Panc1 (cell line): ENCODE measurements at regions of chr4 and their contacts with region 1.

Region 1: DNA sequence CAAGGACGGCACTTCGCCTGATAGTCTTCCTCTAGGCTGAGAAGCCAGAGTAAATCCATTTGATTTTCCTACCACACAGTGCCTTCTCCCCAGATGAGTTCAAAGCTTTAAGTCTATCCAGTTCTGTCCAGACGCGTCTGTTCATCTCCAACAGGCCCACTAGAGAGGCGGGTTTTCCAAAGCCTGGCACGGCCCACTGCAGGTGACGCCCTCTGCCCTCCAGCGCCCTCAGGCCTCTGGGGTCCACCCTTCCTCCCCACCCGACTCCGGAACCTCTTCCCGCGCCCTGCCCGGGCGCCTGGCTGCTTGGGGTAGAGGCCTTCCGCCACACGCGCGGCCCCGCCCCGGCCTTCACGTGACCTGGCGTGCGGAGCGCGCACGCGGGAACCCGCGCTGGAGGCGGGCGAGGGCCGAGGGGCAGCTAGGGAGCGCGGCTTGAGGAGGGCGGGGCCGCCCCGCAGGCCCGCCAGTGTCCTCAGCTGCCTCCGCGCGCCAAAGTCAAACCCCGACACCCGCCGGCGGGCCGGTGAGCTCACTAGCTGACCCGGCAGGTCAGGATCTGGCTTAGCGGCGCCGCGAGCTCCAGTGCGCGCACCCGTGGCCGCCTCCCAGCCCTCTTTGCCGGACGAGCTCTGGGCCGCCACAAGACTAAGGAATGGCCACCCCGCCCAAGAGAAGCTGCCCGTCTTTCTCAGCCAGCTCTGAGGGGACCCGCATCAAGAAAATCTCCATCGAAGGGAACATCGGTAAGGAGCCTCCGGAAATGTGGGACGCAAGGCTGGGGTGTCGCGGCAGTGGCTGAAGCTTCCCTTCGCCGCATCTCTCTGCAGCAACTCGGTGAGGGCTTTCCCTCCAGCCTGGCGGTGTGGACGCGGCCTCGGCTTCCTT is at the start of gene DCK:
- DNase-seq: peak; percentile 20
- ATAC-seq: peak; percentile 98
- H3K4me3 ChIP-seq: peak within 1 kb of the TSS; percentile 87 to 88
- H3K27ac ChIP-seq: peak within 1 kb of the TSS; percentile 89
- H3K4me1 ChIP-seq: no peaks in the 10 kb centered on the region
- H3K27me3 ChIP-seq: no peaks in the 10 kb centered on the region
- CTCF ChIP-seq: no peak
- total RNA-seq, gene DCK: 17.6 TPM

Region 2: GRCh38 chr4:71009890-71010588 is 16.6 kb after region 1 on chr4:
- CTCF ChIA-PET with region 1: interaction called, 11 read pairs
- POLR2A ChIA-PET with region 1: interaction called, 6 read pairs
- in situ Hi-C with region 1: no loop called
- intact Hi-C with region 1: no loop called
- DNase-seq: peak; percentile 27
- ATAC-seq: no peak
- H3K4me3 ChIP-seq: no peak overlapping the region
- H3K27ac ChIP-seq: no peak overlapping the region
- H3K4me1 ChIP-seq: no peaks in the 10 kb centered on the region
- H3K27me3 ChIP-seq: no peaks in the 10 kb centered on the region
- CTCF ChIP-seq: peak; percentile 60; the same call in 1 of the 2 replicates